Activated T-helper 1 cell treated with anti-CD3 and anti-CD28 coated beads, Interleukin-12 subunit alpha, Interleukin-12 subunit beta, Interleukin-2, Interleukin-4 antibody, amounts not matched to agents 30 ng/mL and 10 ng/mL and 1 ng/mL, durations not matched to agents 14 hours and 24 hours and 36 hours (primary cell): ENCODE measurements at regions of chr2 and their contacts with region 1.

Region 1: DNA sequence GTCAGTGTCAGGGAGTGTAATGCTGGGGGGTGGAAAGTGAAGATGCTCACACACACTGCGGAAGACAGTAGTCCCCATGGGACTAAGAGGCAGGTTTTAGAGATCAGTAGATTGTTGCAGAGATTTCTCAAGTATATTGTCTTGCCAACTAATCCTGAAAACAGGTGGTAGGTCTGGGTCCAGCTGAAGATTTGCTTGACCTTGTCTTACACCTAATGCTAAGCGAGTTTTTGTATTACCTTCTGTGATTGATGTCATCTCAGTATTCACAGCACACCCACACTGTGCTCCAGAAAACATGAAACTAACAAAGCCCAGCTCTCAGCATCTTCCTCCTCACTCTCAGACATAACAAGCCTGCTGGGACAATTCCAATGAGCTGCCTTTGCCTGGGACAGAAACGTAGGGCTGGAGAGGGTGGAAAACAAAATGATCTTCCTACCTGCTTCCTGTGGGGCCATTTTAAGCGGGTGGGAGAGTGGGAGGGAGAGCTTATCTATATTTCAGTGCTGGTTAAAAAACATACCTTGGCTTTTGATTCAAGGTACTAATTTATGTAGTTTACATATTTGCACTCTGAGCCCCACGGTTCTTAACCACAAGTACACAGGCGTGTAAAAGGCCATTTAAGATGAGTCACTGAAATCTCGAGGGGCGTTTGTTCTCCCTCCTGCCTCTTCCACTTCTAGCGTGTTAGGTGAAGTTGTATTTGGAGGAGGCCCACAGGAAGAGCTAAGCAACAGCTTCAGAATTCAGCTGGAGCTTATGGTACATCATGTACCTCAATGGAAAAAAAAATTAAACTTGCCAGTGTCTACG is 23.1 kb upstream of the RBMS1 start:
- DNase-seq: no peak
- H3K4me3 Mint-ChIP-seq: peak overlapping the region; percentile 31
- H3K27ac Mint-ChIP-seq: peak overlapping the region; percentile 84
- H3K4me1 Mint-ChIP-seq: peaks cover 42% of the 10 kb centered on the region
- H3K27me3 Mint-ChIP-seq: peaks cover 2% of the 10 kb centered on the region

Region 2: DNA sequence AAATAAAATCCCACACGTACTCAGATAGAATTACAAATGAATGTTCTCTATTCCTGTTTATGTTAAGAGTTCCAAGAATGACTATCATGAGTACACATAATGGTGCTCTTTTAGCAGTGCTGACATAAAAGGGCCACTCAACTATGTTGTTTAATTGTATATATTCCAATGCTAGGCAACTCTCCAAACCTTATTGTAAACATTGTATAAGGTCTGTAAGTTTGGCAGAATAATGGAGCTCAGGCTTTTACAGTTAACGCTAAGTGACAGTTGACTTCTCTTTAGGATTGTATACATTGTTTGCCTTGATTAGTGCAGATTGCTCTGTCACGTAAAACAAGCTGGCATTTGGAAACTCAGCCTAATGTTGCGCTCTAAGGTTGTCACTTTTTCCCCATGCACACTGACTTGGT is 43.9 kb before region 1 on chr2:
- intact Hi-C with region 1: loop called (anchors 1 kb)
- DNase-seq: no peak
- H3K4me3 Mint-ChIP-seq: peak overlapping the region; percentile 49
- H3K27ac Mint-ChIP-seq: peak overlapping the region; percentile 59
- H3K4me1 Mint-ChIP-seq: peaks cover 67% of the 10 kb centered on the region
- H3K27me3 Mint-ChIP-seq: no peaks in the 10 kb centered on the region

Region 3: DNA sequence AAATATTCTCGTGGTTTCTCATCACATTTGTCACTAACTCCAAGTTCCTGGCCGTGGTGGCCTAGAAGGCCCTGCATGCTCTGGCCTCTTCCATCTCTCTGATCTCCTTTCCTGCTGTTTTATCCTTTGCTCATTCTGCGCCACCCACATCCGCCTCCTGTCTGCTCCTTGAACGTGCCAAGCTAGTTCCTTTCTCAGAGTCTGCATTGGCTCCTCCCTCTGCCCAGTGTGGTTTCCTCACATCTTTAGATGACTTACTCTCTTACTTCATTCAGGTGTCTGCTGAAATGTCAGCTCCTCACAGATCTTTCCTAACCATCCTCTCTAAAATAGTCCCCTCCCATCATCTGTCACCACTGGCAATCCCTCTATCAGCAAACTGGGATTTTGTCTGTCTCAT is 135.5 kb after region 1 on chr2:
- intact Hi-C with region 1: loop called (anchors 2 kb)
- DNase-seq: peak; percentile 48
- H3K4me3 Mint-ChIP-seq: peak overlapping the region; percentile 4
- H3K27ac Mint-ChIP-seq: peak overlapping the region; percentile 27
- H3K4me1 Mint-ChIP-seq: peaks cover 20% of the 10 kb centered on the region
- H3K27me3 Mint-ChIP-seq: peaks cover 4% of the 10 kb centered on the region